GM10248 (cell line): ENCODE measurements at regions of chr2 and their contacts with region 1.

Region 1: GRCh38 chr2:96760036-96760985 is at the start of gene CNNM4:
- DNase-seq: peak; percentile 95
- CTCF ChIP-seq: peak; percentile 9

Region 2: DNA sequence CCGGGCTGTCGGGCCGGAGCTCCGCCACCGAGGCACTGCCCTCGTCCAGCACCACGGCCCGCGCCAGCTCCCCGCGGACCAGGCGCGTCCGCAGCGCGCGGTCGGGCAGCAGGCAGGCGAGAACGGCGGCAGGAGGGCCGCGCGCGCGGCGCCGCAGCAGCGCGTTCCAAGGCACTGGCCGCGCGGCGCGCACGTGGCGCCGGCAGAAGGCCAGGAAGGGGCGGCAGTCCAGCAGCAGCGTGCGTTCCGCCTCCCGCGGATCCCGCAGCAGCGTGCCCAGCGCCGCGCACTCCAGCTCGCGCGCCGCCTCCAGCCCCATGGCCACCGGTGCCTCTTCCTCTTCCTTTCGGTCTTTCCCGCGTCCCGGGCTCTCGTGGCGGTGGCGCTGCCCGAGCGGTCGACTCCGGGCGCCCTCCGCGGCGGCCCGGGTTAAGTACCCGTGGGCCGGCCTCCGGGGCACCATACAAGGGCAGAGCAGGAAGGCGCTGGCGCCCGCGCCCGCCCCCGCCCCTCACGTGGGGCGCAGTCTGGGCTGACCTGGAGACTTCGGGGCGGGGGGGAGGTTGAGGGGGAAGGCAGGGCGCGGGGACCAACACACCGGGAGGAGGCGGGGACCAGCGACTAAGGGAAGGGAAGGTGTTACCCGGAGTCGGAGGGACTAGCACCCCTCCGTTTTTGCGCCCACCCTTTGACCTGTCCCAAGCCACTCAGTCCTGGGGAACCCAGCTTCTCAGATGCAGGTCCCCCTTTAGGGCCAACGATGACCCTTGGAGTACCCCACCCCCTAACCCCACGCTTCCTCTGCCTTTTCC is 615.1 kb before region 1 on chr2 and contains the start of gene DUSP2:
- CTCF ChIA-PET with region 1: no interaction called
- POLR2A ChIA-PET with region 1: no interaction called
- DNase-seq: peak; percentile 95
- CTCF ChIP-seq: no peak

Region 3: DNA sequence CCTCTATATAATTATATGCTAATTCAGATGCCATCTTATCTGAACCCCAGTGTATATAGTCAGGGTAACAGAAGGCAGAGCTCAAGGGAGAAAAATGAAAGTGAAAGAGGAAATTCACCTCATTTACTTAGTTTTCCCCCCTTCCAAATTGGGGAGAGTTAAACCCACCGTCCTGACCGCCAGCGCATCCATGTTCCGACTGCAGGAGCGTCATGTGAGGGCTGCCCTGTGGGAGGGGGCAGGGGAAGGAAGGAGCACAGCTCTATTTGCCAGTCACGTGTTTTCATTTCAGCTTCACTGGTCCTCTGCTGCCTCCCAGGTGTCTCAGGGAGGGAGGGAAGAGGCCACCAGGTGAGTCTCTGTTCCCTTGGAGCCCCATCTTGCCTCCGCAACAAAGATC is 13.6 kb after region 1 on chr2:
- CTCF ChIA-PET with region 1: interaction called, 171 read pairs
- POLR2A ChIA-PET with region 1: interaction called, 6 read pairs
- DNase-seq: no peak
- CTCF ChIP-seq: no peak

Region 4: DNA sequence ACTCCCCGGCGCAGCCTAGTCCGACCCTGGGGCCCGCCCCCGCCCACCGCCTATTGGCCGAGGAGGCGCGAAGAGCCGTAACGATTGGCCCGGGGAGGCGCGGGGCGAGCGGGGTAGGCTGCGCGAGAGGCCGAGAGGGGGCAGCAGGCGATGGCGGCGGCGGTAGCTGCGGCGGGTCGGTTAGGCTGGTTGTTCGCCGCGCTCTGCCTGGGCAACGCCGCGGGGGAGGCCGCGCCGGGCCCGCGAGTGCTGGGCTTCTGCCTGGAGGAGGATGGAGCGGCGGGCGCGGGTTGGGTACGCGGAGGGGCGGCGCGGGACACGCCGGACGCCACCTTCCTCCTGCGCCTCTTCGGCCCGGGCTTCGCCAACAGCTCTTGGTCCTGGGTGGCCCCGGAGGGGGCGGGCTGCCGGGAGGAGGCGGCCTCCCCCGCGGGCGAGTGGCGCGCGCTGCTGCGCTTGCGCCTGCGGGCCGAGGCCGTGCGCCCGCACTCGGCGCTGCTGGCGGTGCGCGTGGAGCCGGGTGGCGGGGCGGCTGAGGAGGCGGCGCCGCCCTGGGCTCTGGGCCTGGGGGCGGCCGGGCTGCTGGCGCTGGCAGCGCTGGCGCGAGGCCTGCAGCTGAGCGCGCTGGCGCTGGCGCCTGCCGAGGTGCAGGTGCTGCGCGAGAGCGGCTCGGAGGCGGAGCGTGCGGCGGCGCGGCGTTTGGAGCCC is 56.0 kb after region 1 on chr2 and contains the start of gene CNNM3:
- CTCF ChIA-PET with region 1: interaction called, 41 read pairs
- POLR2A ChIA-PET with region 1: no interaction called
- DNase-seq: peak; percentile 99
- CTCF ChIP-seq: peak; percentile 37

Region 5: DNA sequence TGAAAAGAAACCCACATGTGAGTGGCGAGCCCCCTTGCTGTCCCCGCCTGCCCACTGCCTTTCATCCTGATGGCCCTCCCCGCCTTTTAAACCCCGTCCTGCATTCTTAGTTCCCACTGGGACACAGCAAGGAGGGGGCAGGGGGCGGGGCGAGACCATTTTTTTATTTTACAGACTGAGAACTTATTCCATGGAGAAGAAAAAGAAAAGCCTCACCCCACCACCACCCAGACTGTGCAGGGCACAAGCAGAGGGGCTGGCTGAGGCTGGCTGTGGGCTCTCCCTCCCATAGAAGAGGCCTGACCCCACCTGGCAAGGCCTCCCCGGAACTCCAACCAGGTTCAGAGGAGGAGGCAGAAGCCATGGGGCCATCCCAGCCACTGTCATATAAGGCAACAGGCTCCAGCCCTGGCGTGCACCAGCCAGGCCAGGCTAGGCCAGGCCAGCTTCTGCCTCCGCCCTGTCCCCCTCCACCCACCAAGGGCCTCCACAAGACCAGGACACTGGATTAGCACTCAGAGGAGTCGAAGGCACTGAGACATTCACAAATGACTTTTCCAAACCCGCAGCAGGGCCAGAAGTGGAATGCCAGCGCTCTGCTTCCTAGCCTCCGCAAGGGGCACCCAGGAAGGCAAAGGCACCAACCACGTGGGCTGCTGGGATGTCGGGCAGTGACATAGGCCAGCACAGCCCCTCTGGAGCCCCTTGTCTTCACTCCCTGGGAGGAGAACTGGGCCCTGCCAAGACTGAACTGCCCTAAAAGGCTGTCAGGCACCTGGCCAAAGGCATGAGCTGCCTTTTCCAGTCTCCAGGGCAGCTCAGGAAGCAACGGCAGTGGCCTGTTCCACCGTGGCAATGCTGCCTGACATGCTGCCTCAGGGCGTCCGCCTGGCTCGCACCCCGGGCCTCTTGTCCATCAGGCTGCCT is 147.1 kb after region 1 on chr2:
- CTCF ChIA-PET with region 1: no interaction called
- POLR2A ChIA-PET with region 1: no interaction called
- DNase-seq: no peak
- CTCF ChIP-seq: no peak